Stomach (tissue), 19 donors: ENCODE measurements at regions of chr13 and their contacts with region 1.

Region 1: DNA sequence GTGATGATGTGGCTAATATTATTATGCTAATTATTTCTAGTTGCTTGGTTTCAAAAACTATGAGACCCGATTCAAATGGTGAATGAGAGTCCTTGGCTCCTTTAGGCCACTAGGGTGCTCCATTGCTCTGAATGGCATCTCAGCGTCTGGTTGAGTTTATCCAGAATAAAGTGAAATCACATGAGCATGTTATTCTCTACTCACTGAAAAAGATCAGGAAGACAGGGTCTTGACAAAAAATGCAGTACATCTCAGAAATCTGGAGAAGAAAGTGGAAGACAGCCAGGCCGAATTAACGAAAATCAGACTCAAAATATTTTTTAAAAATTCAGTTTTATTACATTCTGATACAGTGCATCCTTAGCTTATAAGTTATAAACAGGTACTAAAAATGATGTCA is 516.2 kb downstream of the MYO16 start:
- DNase-seq: peak; percentile 55 to 85
- H3K4me3 ChIP-seq: no peak overlapping the region
- H3K27ac ChIP-seq: no peak overlapping the region
- H3K4me1 ChIP-seq: peaks cover under 1 to 7% (median 4%) of the 10 kb centered on the region in 4 donors
- H3K27me3 ChIP-seq: peaks cover 2 to 20% (median 8%) of the 10 kb centered on the region in 3 donors
- CTCF ChIP-seq: peak in 5 of 7 experiments; percentile 55 to 74 (median 67)
- EP300 ChIP-seq: no peak
- POLR2A ChIP-seq: no peak

Region 2: DNA sequence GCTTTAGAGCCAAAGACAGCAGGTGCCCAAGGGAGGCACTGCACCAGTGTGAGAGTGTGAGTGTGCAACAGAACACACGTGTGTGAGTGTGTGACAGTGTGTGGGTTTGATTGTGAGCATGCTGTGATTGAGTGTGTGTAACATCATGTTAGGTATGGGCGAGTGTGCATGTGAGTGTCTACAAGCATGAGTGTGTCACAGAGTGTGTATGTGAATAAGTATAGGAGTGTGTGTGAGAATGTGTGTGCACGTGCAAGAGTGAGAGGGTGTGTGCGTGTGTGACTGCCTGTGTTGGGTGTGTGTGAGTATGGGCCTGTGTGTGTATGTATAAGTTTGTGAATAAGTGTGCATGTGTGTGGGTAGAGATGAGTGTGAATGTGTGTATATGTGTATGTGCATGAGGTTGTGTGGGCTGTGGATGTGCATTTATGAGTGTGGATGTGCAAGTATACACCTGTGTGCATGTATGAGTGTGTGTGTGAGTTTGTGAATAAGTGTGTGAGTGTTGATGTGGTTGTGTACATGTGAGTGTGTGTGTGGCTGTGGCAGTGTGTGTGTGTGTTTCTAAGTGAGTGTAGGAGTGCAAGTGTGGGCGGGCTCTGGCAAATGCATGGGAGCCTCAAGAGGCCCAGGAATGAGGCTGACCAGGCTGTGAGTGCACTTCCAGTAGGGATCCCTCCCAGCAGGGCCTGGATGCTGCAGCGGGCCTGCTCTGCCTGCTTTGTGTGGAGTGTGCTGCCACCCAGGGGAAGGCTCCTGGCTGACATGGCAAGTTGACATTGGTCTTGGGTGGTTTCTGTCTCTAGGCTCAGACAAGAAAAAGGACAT is 962.9 kb after region 1 on chr13:
- intact Hi-C with region 1: loop called (anchors 10 kb)
- DNase-seq: peak; percentile 76 to 93
- H3K4me3 ChIP-seq: no peak overlapping the region
- H3K27ac ChIP-seq: peak overlapping the region in 1 of 5 donors; percentile 75
- H3K4me1 ChIP-seq: peaks cover 0 to 19% (median 7%) of the 10 kb centered on the region in 4 donors
- H3K27me3 ChIP-seq: no peaks in the 10 kb centered on the region
- CTCF ChIP-seq: peak in 5 of 7 experiments; percentile 42 to 74 (median 61)
- EP300 ChIP-seq: no peak
- POLR2A ChIP-seq: peak in 1 of 4 donors; percentile 53